RWPE1 (cell line): ENCODE measurements at regions of chr20 and their contacts with region 1.

Region 1: DNA sequence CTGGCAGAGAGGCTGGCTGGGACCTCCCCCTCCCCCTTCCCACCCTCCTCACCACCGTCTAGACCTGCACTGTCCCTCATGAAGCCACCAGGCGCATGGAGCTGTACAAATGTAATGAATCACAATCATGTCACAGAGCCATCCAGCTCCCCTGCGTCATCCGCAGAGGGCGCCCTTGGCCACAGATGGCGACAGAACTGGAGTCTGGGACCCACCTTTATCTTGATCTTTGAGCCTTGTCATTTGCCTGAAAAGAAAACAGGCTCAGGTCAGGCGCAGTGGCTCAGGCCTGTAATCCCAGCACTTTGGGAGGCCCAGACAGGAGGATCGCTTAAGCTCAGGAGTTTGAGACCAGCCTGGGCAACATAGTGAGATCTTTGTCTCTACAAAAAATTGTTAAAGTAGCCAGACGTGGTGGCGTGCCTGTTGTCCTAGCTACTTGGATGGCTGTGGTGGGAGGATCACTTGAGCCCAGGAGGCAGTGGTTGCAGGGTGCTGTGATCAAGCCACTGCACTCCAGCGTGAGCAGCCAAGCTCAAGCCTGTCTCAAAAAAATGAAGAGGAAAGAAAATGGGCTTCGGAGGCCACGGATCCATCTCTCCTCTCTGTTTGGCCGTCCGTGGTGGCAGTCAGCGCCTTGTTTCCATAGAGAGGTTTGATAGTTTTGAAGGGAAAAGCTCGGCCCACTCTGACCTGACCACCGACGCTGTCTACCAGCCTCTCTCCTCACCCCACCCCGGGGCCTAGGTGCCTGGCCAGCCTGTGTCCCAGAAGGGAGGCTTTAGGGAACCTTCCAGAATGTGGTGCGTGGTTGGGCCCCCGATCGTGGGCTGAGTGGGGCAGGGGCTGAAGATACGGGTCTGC is 6.2 kb downstream of the COL9A3 start:
- DNase-seq: peak; percentile 55
- H3K27ac ChIP-seq: peak overlapping the region; percentile 47
- CTCF ChIP-seq: peak; percentile 65

Region 2: DNA sequence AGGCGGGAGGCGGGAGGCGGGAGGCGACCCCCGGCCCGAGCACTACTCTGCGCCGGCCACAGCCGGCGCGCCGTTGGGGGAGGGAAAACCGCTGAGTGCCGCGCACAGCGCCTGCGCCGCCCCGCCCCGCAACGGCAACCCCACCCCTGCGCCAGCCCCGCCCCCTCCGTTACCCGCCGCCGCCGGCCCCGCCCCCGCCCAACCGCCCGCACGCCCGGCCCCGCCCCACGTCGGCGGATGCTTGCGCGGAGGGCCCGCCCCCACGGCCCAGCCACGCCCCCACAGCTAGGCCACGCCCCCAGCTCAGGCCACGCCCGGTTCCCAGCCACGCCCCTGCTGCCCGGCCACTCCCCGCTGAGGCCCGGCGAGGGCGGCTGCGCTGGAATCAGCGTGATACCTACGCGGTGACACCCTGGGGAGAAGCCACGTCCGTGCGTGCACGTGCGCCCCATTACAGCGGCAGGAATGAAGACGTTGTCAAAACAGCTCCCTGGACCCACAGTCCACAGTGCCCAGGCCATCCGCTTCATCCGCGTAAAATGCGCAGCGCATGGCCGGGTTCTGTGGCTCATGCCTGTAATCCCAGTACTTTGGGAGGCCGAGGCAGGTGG is 38.8 kb after region 1 on chr20 and contains the start of gene TCFL5:
- CTCF ChIA-PET with region 1: interaction called, 13 read pairs
- POLR2A ChIA-PET with region 1: interaction called, 3 read pairs
- DNase-seq: peak; percentile 91
- H3K27ac ChIP-seq: peak within 1 kb of the TSS; percentile 74
- CTCF ChIP-seq: no peak